AG04449 (cell line): ENCODE measurements at regions of chr12 and their contacts with region 1.

Region 1: GRCh38 chr12:122356192-122356635 is 66.3 kb downstream of the CLIP1 start:
- DNase-seq: no peak
- H3K4me3 ChIP-seq: no peak overlapping the region
- CTCF ChIP-seq: peak; percentile 56

Region 2: GRCh38 chr12:122123051-122123760 is 233.0 kb before region 1 on chr12:
- CTCF ChIA-PET with region 1: no interaction called
- POLR2A ChIA-PET with region 1: no interaction called
- DNase-seq: no peak
- H3K4me3 ChIP-seq: no peak overlapping the region; the same call in 1 of the 2 replicates
- CTCF ChIP-seq: peak; percentile 59

Region 3: GRCh38 chr12:122322501-122322900 is 33.7 kb before region 1 on chr12:
- CTCF ChIA-PET with region 1: interaction called, 31 read pairs
- POLR2A ChIA-PET with region 1: interaction called, 4 read pairs
- DNase-seq: no peak
- H3K4me3 ChIP-seq: no peak overlapping the region
- CTCF ChIP-seq: no peak

Region 4: GRCh38 chr12:122336015-122336946 is 19.9 kb before region 1 on chr12:
- CTCF ChIA-PET with region 1: interaction called, 46 read pairs
- POLR2A ChIA-PET with region 1: no interaction called
- DNase-seq: no peak
- H3K4me3 ChIP-seq: no peak overlapping the region
- CTCF ChIP-seq: peak; percentile 37

Region 5: DNA sequence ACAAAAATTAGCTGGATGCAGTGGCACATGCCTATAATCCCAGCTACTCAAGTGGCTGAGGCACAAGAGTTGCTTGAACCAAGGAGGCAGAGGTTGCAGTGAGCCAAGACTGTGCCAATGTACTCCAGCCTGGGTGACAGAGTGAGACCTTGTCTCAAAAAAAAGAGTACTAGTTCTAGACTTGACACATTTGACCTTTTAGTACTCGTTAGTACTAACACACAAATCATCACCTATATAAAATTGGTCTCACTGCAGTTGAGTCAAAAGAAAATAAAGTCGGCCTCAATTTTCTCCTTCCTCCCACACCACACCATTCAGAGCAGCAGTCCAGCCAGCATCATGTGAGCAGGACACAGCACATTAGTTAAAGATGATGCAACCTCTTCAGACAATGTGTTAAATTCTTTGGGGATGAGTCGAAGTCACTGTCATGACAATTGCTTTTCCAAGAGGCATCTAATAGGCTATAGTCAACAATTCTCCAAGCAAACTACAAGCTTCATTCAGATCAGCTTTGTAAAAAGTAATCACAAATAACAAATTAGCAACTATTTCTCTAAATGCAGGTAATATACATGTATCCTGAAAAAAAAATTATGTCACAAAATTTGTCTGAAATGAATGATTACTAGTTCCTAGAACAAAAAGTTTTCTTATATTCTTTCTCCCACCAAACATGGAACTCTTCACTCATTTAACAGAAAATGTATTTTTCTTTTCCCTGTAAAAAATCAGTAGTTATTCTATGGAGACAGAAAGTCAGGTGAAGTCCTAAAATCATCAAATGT is 10.7 kb after region 1 on chr12:
- CTCF ChIA-PET with region 1: interaction called, 76 read pairs
- POLR2A ChIA-PET with region 1: interaction called, 3 read pairs
- DNase-seq: peak; percentile 73
- H3K4me3 ChIP-seq: no peak overlapping the region
- CTCF ChIP-seq: no peak

Region 6: GRCh38 chr12:122382919-122383350 is 26.7 kb after region 1 on chr12:
- CTCF ChIA-PET with region 1: interaction called, 10 read pairs
- POLR2A ChIA-PET with region 1: no interaction called
- DNase-seq: no peak
- H3K4me3 ChIP-seq: no peak overlapping the region
- CTCF ChIP-seq: no peak

Region 7: DNA sequence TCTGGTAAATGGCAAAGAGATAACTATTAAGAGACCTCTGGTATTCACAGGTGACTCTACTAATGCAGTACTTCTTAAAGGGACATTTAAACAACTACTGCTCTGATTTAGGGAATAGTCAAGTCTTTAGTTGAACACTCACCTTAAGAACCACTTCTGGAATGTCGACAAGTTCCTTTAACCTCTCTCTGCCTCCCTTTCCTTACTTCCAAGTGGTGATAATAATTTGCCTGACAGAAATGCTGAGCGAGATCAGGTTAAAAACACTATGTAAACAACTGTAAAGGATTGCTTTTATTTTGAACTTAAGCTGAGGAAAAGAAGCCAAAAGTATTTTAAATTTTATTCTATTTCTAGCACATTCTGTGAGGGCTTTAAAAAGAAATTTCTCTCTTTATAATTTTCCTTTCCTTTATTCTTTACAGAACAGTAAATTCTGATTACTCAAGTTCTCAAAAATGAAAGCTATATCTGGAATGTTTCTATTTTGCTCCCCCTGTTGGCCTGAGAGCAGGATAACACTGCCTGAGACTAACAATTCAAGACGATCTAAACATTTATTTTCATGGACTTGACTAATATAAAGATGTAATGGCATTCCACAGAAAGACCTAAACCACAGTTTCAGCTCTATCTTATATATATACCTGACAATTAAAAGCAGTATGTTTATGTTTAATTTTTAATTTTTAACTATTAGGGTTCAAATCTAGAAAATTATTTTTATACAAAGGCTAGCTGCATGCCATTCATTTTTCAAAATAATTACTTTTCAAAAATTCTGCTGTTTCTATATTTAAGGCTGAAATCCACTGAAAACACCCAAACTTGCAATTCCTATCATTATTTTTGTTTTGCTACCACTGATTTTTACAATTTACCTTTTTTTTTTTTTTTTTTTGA is 115.4 kb after region 1 on chr12:
- CTCF ChIA-PET with region 1: interaction called, 21 read pairs
- POLR2A ChIA-PET with region 1: no interaction called
- DNase-seq: no peak
- H3K4me3 ChIP-seq: no peak overlapping the region
- CTCF ChIP-seq: peak; percentile 59